ENCODE measurements at regions of chr12 and their contacts with region 1.

Region 1: GRCh38 chr12:110937104-110937641 is 16.8 kb upstream of the MYL2 start:
- H3K4me3 ChIP-seq: no peak overlapping the region
- H3K27ac ChIP-seq: no peak overlapping the region
- H3K4me1 ChIP-seq: no peaks in the 10 kb centered on the region
- CTCF ChIP-seq: peak; percentile 74

Region 2: DNA sequence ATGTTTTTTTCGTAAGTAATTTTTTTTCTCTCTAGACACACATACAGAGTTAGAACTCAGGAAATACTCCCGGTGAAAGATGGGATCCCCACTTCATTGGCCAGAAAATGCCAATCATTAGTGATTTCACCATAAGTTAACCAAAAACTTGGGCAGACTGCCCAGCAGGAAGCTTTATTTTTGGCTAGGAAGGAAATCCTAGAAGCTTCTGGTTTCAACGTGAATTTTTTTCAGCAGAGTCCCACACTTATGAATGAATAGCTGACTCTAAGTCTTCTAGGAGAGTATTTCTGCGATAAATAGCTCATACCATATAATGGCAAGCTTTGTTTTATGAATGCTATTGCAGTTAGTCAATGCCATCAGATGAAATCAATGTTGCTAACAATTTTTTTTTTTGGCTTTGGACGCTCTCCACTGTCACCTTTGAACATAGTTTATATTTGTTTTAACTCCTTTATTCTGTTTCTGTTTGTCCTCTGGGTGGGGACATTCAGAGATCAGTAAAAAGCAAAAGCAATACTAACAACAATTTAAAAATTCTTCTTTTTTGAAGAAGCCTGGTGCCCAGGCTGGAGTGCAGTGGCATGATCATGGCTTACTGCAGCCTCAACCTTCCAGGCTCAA is 204.0 kb before region 1 on chr12:
- CTCF ChIA-PET with region 1: no interaction called
- POLR2A ChIA-PET with region 1: no interaction called
- H3K4me3 ChIP-seq: no peak overlapping the region
- H3K27ac ChIP-seq: no peak overlapping the region
- H3K4me1 ChIP-seq: peaks cover 19% of the 10 kb centered on the region
- CTCF ChIP-seq: no peak

Region 3: GRCh38 chr12:110790301-110790700 is 146.9 kb before region 1 on chr12:
- CTCF ChIA-PET with region 1: no interaction called
- POLR2A ChIA-PET with region 1: no interaction called
- H3K4me3 ChIP-seq: no peak overlapping the region
- H3K27ac ChIP-seq: no peak overlapping the region
- H3K4me1 ChIP-seq: no peaks in the 10 kb centered on the region
- CTCF ChIP-seq: no peak

Region 4: GRCh38 chr12:110923692-110924334 is 13.4 kb before region 1 on chr12:
- CTCF ChIA-PET with region 1: interaction called, 10 read pairs
- POLR2A ChIA-PET with region 1: no interaction called
- H3K4me3 ChIP-seq: no peak overlapping the region
- H3K27ac ChIP-seq: no peak overlapping the region
- H3K4me1 ChIP-seq: no peaks in the 10 kb centered on the region
- CTCF ChIP-seq: no peak

Measured in HEK293 (cell line).